Transverse colon (tissue), 4 donors: ENCODE measurements at regions of chr6 and their contacts with region 1.

Region 1: DNA sequence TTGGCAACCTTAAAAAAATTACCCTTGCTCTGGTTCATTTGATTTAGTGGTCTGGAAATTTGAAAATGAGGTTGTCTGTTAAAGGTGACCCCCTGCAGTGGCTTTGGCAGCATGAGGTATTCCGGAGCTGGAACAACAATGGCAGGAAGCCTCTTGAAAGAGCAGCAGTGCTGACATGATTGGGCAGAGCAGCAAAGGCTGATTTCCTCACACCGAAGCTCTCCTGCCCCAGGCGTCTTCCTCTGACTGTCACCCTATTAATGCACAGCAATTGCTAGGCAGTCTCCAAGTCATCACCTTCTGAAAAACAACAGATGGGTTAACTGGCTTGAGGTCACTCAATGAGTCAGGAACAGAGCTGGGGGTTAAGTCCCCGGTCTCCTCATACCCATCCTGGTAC is 241.8 kb upstream of the MMS22L start:
- DNase-seq: no peak
- H3K4me3 ChIP-seq: no peak overlapping the region
- H3K27ac ChIP-seq: no peak overlapping the region
- H3K4me1 ChIP-seq: no peaks in the 10 kb centered on the region
- H3K27me3 ChIP-seq: no peaks in the 10 kb centered on the region
- CTCF ChIP-seq: no peak
- EP300 ChIP-seq: no peak
- POLR2A ChIP-seq: no peak

Region 2: DNA sequence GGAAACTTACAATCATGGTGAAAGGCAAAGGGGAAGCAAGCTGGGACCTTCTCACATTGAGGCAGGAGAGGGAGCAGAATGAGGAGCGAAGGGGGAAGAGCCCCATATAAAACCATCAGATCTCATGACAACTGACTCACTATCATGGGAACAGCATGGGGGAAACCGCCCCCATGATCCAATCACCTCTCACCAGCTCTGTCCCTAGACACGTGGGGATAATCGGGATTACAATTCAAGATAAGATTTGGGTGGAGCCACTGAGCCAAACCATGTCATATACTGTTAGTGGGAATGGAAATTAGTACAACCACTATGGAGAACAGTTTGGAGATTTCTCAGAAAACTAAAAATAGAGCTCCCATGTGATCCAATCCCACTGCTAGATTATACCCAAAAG is 1783.8 kb before region 1 on chr6:
- in situ Hi-C with region 1: no loop called
- intact Hi-C with region 1: loop called (anchors 5 kb)
- DNase-seq: no peak
- H3K4me3 ChIP-seq: no peak overlapping the region
- H3K27ac ChIP-seq: no peak overlapping the region
- H3K4me1 ChIP-seq: no peaks in the 10 kb centered on the region
- H3K27me3 ChIP-seq: no peaks in the 10 kb centered on the region
- CTCF ChIP-seq: no peak
- EP300 ChIP-seq: no peak
- POLR2A ChIP-seq: no peak

Region 3: DNA sequence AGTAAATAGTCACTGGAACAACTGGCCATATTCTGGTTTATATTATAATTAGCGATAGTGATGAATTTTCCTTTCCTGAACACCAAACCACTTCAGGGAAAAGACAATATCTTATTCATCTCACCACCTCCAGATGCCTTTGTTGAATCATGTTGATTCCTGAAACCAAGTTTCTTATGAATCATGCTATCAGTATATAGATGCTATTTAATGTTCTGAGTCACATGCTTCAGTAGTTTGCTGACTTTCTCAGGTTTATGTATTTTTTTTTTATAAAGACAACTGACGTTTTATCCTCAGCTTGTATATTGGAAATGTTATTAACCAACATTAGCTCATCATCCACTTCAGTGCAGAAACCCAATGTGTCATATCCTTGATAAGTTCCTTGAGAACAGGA is 599.4 kb after region 1 on chr6:
- in situ Hi-C with region 1: no loop called
- intact Hi-C with region 1: no loop called
- DNase-seq: no peak
- H3K4me3 ChIP-seq: no peak overlapping the region
- H3K27ac ChIP-seq: no peak overlapping the region
- H3K4me1 ChIP-seq: no peaks in the 10 kb centered on the region
- H3K27me3 ChIP-seq: no peaks in the 10 kb centered on the region
- CTCF ChIP-seq: no peak
- EP300 ChIP-seq: no peak
- POLR2A ChIP-seq: no peak